Caco-2 (cell line): ENCODE measurements at regions of chr12 and their contacts with region 1.

Region 1: GRCh38 chr12:48957141-48958048 is at the start of gene ARF3:
- DNase-seq: peak; percentile 97 to 98
- H3K4me3 ChIP-seq: peak within 1 kb of the TSS; percentile 79
- H3K4me3 Mint-ChIP-seq: peak within 1 kb of the TSS; percentile 89
- H3K27ac Mint-ChIP-seq: peak within 1 kb of the TSS; percentile 87
- H3K4me1 ChIP-seq: peaks cover 8% of the 10 kb centered on the region; the same call in 1 of the 2 replicates
- H3K4me1 Mint-ChIP-seq: peaks cover 13% of the 10 kb centered on the region
- H3K27me3 ChIP-seq: no peaks in the 10 kb centered on the region
- H3K27me3 Mint-ChIP-seq: no peaks in the 10 kb centered on the region
- CTCF ChIP-seq: no peak
- total RNA-seq, gene ARF3: 249 and 257 TPM in 2 replicates

Region 2: DNA sequence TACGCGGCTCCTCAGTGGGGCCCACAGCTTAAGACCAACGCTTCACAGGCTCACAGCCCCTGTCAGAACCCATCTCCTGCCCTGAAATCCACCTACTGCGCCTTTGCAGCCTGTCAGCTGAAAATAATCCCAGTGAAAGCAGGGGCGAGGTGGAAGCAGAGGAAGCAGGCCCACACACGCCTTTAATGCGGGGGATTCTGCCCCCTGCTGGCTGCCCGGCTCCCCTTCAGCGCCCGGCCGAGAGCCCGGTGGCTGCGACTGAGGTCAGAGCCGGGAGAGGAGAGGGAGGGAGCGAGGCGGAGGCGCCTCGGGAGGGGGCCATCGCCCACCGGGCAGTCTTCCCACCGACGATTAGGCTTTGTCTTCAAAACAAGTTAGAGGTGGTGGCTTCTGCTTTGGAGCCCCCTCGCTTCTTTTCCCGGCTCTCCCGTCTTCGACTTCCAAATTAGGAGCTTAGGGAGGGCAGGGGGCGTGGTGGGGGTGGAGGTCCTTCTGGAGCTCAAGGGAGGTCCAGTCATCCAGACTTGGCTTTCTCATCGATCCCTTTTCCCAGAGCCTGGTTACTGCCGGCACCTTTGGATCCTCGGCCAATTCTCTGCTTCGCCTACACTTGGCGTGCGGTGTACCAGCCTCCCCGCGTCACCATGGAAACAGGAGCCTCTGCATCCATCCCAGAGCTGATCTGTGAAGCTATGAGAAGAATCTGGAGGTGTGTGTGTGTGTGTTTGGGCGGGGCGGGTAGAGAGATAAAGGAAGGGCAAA is 66.6 kb before region 1 on chr12:
- CTCF ChIA-PET with region 1: interaction called, 12 read pairs
- POLR2A ChIA-PET with region 1: interaction called, 3 read pairs
- intact Hi-C with region 1: no loop called
- DNase-seq: peak; percentile 97 to 99
- H3K4me3 ChIP-seq: peak overlapping the region; percentile 50
- H3K4me3 Mint-ChIP-seq: peak overlapping the region; percentile 63
- H3K27ac Mint-ChIP-seq: peak overlapping the region; percentile 66
- H3K4me1 ChIP-seq: peaks cover 33% of the 10 kb centered on the region
- H3K4me1 Mint-ChIP-seq: peaks cover 36% of the 10 kb centered on the region
- H3K27me3 ChIP-seq: no peaks in the 10 kb centered on the region
- H3K27me3 Mint-ChIP-seq: no peaks in the 10 kb centered on the region
- CTCF ChIP-seq: peak; percentile 98 to 99

Region 3: GRCh38 chr12:48903982-48904411 is 53.4 kb before region 1 on chr12:
- CTCF ChIA-PET with region 1: no interaction called
- POLR2A ChIA-PET with region 1: no interaction called
- intact Hi-C with region 1: no loop called
- DNase-seq: no peak
- H3K4me3 ChIP-seq: no peak overlapping the region
- H3K4me3 Mint-ChIP-seq: no peak overlapping the region
- H3K27ac Mint-ChIP-seq: no peak overlapping the region
- H3K4me1 ChIP-seq: peaks cover 20% of the 10 kb centered on the region
- H3K4me1 Mint-ChIP-seq: peaks cover 7% of the 10 kb centered on the region
- H3K27me3 ChIP-seq: no peaks in the 10 kb centered on the region
- H3K27me3 Mint-ChIP-seq: no peaks in the 10 kb centered on the region
- CTCF ChIP-seq: no peak

Region 4: DNA sequence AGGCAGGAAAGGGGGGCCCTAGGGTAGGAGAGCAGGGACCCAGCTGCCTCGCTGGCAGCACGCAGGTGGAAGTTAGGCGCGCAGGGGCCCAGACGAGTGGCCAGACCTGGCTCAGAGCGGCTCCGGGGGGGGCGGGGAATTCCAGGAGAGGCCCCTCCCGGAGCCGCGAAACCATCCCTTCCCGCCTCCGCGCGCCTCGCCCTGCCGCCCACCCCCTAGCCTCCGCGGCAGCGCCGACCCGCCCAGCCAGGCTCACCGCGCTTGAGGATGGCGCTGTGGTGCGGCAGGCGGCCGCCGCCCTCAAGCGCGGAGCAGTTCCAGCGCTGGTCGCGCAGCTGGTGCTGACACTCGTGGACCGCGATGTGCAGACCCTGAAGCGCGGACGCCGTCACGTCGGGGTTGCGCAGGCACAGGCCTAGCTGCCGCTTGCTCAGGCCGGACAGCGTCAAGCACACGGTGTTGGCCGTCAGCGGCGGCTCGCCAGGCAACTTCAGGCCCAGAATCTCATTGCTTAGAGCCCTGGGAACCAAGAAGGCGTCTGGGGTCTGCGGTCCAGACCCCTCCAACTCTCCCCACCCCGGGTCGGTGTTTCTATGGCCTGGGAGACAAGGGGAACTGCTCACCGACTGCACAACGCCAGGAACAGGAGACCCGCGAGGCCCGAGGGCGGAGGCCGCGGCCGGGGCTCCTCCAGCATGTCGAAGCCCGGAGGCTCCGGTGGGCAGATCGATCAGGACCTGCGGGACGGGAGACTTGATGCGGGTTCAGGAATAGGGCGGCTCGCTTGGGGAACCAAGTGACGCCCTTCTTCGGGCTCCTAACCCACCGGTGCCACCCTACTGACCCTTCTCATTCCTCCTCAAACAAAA is 12.7 kb after region 1 on chr12:
- CTCF ChIA-PET with region 1: interaction called, 5 read pairs
- POLR2A ChIA-PET with region 1: interaction called, 5 read pairs
- intact Hi-C with region 1: loop called (anchors 2 kb)
- DNase-seq: no peak
- H3K4me3 ChIP-seq: no peak overlapping the region
- H3K4me3 Mint-ChIP-seq: peak overlapping the region; percentile 77
- H3K27ac Mint-ChIP-seq: peak overlapping the region; percentile 7
- H3K4me1 ChIP-seq: peaks cover 25% of the 10 kb centered on the region
- H3K4me1 Mint-ChIP-seq: peaks cover 18% of the 10 kb centered on the region
- H3K27me3 ChIP-seq: no peaks in the 10 kb centered on the region
- H3K27me3 Mint-ChIP-seq: peaks cover 3% of the 10 kb centered on the region
- CTCF ChIP-seq: no peak

Region 5: DNA sequence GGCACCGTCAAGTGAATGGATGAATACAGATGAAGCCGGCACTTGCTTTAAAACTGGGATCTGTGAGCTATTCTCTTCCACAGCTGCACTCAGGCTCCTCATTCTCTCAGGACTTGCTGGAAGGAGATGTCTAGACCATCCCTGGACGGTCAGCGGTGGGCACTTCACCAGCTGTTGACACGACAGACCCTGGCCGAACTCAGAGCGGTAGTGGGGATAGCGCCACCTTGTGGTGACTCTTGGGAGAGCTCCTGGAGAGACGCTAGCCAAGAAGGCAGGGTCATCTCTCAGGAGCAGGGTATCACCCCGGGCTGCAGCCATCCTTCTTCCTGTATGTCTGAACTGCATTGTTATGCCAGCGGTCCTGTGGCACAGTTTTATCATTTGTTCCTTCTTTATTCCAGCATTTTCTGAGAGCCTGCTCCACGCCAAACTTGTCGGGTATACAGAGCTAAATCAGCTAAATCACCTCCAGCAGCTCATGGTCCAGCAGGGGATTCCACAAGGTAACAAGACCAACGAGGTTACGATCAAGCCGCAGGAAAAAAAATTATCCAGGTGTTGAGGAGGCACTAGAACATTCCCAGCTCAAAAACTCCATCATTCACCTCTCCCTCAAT is 30.7 kb after region 1 on chr12:
- CTCF ChIA-PET with region 1: interaction called, 11 read pairs
- POLR2A ChIA-PET with region 1: interaction called, 5 read pairs
- intact Hi-C with region 1: no loop called
- DNase-seq: peak; percentile 67 to 81
- H3K4me3 ChIP-seq: no peak overlapping the region
- H3K4me3 Mint-ChIP-seq: no peak overlapping the region
- H3K27ac Mint-ChIP-seq: no peak overlapping the region
- H3K4me1 ChIP-seq: no peaks in the 10 kb centered on the region
- H3K4me1 Mint-ChIP-seq: no peaks in the 10 kb centered on the region
- H3K27me3 ChIP-seq: no peaks in the 10 kb centered on the region; the same call in 1 of the 2 replicates
- H3K27me3 Mint-ChIP-seq: peaks cover 18% of the 10 kb centered on the region
- CTCF ChIP-seq: peak; percentile 87 to 89

Region 6: DNA sequence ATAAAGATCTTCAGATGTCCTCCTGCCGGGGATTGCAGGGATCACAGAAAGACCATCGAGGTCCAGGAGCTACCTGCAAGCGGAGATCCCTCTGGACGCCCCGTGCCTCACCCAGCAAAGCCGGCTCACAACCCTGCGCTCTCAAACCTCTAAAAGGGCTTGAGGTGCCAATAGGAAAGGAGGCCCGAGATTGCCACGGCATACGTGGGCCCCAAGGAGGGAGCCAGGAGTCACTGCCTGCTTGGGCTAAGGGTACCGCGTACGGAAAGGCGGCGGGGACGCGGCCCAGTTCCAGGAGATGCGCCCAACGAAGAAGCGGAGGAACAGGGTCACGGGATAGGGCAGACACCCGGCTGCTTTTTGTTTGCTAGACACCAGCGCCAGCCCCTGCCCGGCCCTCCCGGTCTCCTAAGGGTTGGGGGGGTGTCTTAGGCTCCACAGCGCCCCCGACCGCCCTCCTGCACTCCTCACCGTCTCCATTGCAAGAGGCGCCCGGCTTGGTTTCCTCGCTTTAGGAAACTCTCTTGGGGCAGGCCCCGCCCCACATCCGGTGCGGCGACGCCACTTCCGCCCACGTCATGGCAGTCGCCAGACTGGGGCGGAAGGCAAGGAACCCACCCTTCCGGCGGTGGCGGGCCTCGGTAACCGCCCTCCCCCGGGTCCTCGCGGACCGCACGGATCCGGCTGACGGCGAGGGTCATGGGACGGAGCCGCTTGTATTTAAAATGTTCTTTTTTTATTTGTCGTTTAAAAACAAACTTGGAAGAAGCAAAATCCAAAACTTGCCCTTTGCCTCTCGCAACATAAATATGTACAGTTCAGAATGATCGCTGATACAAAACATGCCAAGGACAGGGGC is 61.1 kb after region 1 on chr12 and contains the start of gene PRKAG1:
- CTCF ChIA-PET with region 1: interaction called, 6 read pairs
- POLR2A ChIA-PET with region 1: interaction called, 5 read pairs
- intact Hi-C with region 1: loop called (anchors 1 kb)
- DNase-seq: peak; percentile 97 to 98
- H3K4me3 ChIP-seq: peak within 1 kb of the TSS; percentile 73
- H3K4me3 Mint-ChIP-seq: peak within 1 kb of the TSS; percentile 91
- H3K27ac Mint-ChIP-seq: peak within 1 kb of the TSS; percentile 98
- H3K4me1 ChIP-seq: 0 out of 2 replicates have a peak, but pooled peaks cover 4% of the 10 kb centered on the region
- H3K4me1 Mint-ChIP-seq: peaks cover 19% of the 10 kb centered on the region
- H3K27me3 ChIP-seq: no peaks in the 10 kb centered on the region
- H3K27me3 Mint-ChIP-seq: no peaks in the 10 kb centered on the region
- CTCF ChIP-seq: peak; percentile 40 to 77
- total RNA-seq, gene PRKAG1: 60.3 and 61.4 TPM in 2 replicates